ENCODE measurements at regions of chr15 and their contacts with region 1.

Region 1: DNA sequence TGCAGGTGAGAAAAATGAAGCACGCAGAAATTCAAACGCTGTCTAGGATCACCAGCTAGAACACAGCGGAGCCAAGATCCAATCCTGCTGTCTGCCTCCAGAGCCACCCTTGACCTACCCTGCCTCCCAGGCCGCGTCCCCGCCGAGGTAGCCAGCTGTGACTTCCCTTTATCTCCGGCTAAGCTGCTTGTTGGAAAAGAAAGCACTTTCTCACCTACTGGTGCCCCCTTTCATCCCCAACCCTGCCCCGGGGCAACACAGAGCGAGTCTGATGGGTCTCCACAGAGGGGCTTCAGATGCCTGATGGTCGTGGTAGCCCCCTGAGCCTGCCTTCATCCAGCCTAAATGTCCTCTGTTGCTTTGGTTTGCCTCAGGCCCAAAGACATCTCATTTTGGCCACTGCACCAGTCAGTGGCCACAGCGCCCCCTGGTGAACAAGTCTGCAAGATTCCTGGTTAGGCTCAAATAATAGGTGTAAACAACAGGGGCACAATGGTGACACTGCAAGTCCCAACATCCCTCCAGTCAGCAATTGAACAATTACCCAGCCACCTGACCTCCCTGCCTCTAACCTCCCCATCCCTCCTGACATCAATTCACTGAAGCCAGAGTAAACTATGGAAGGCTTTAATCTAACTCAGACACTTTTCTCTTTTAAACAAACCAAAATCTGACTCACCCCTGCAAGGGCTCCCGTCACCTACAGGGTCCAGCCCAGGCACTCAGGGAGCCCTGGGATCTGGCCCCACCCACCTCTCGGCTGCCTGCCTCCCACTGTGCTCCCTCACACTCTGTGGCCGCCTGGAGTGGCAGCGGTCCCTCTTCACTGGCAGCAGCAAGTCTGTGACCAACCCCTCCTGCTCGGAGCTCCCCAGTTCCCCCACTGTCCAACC is 27.3 kb upstream of the BCL2L10 start:
- DNase-seq: peak; percentile 53
- H3K4me3 Mint-ChIP-seq: no peak overlapping the region
- H3K27ac Mint-ChIP-seq: peak overlapping the region; percentile 4
- H3K4me1 Mint-ChIP-seq: peaks cover 7% of the 10 kb centered on the region
- H3K27me3 Mint-ChIP-seq: no peaks in the 10 kb centered on the region

Region 2: DNA sequence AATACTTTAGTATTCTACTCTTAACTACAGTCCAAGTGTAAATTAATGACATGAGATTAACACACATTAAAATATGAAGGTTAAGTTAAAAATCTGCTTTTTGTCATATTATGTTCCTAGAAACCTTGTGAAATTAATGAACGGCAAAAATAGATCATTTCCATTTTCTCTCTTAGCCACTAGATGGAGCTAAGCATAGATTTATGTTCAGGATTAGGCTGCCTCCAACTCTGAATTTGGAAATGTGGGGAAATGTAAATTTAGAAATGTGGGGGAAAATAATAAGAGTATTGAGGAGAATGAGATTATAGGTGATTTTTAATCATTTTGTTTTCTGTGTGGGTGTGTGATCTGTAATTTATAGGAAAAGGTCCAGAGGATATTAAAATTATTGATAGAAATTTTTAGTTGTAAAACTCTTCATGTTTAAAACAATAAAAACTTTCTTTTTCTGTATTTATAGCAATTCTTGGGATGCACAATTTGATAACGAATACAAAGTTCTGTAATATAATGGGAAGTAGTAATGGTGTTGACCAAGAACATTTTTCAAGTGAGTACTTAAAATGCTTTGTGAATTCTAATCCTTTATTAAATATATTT is 251.2 kb before region 1 on chr15:
- intact Hi-C with region 1: loop called (anchors 5 kb)
- DNase-seq: no peak
- H3K4me3 Mint-ChIP-seq: no peak overlapping the region
- H3K27ac Mint-ChIP-seq: no peak overlapping the region
- H3K4me1 Mint-ChIP-seq: peaks cover 8% of the 10 kb centered on the region
- H3K27me3 Mint-ChIP-seq: no peaks in the 10 kb centered on the region

Region 3: DNA sequence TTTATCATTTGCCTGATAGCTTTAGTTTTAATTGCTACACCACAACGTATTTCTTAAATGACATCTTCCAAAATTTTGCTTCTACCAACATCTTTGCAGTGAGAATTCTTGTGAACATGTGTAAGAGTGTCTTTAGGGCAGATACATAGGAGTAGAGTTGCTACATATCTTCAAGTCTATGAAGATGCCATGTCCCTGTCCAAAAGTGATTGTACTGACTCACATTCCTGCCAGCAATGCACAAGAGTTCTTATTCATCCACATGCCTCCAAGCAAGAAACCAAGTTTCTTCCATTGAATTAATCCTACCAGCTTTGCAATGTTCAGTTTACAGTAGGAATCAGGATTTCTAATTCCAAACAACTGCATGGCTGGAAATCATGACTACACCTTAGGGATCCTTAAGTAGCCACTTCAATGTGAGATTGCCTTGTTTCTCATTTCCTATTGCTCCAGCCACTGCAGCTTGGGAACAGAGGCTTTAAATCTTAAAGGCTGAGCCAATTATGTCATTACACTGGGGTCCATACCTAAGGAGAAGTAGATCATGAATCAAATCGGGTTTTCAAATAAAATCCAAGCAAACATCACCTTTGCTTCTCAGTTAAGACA is 71.7 kb before region 1 on chr15:
- intact Hi-C with region 1: no loop called
- DNase-seq: no peak
- H3K4me3 Mint-ChIP-seq: no peak overlapping the region
- H3K27ac Mint-ChIP-seq: no peak overlapping the region
- H3K4me1 Mint-ChIP-seq: peaks cover 13% of the 10 kb centered on the region
- H3K27me3 Mint-ChIP-seq: peaks cover 7% of the 10 kb centered on the region

Region 4: GRCh38 chr15:53490341-53490740 is 1350.5 kb after region 1 on chr15:
- intact Hi-C with region 1: no loop called
- DNase-seq: no peak
- H3K4me3 Mint-ChIP-seq: no peak overlapping the region
- H3K27ac Mint-ChIP-seq: no peak overlapping the region
- H3K4me1 Mint-ChIP-seq: no peaks in the 10 kb centered on the region
- H3K27me3 Mint-ChIP-seq: no peaks in the 10 kb centered on the region

Measured in activated T-helper 1 cell treated with anti-CD3 and anti-CD28 coated beads, Interleukin-12 subunit alpha, Interleukin-12 subunit beta, Interleukin-2, Interleukin-4 antibody, amounts not matched to agents 30 ng/mL and 10 ng/mL and 1 ng/mL, durations not matched to agents 14 hours and 24 hours and 36 hours (primary cell).